Activated CD8-positive, alpha-beta T cell treated with anti-CD3 and anti-CD28 coated beads, Interleukin-2, amount 10 ng/mL, durations not matched to agents 7 days and 5 days (primary cell): ENCODE measurements at regions of chrX and their contacts with region 1.

Region 1: GRCh38 chrX:37745354-37745753 is 34.5 kb upstream of the CYBB start:
- DNase-seq: peak; percentile 85
- ATAC-seq: peak; percentile 92
- H3K4me3 Mint-ChIP-seq: no peak overlapping the region
- H3K27ac Mint-ChIP-seq: peak overlapping the region; percentile 74
- H3K4me1 Mint-ChIP-seq: peaks cover 18% of the 10 kb centered on the region
- H3K27me3 Mint-ChIP-seq: peaks cover 6% of the 10 kb centered on the region

Region 2: DNA sequence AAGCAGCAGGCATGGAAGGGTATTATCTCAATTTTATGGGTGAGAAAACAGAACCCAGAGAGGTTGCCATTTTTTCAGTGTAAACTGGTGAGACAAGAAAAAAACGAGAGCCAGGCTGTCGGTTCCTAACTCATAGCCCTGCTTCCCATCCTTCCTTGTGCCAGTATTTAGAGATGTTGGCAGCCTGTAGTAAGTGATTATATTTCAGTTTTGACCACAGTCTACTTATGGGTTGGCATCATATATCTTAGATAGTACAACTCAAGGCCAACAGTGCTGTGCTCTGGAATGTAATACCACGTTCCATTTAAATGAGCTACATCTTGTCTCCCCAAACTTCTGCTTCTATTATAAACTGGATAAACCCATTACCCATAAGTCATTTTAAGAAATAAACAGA is 19.0 kb before region 1 on chrX:
- CTCF ChIA-PET with region 1: no interaction called
- POLR2A ChIA-PET with region 1: no interaction called
- DNase-seq: no peak
- ATAC-seq: no peak
- H3K4me3 Mint-ChIP-seq: no peak overlapping the region
- H3K27ac Mint-ChIP-seq: no peak overlapping the region
- H3K4me1 Mint-ChIP-seq: no peaks in the 10 kb centered on the region
- H3K27me3 Mint-ChIP-seq: peaks cover 13% of the 10 kb centered on the region

Region 3: GRCh38 chrX:37763400-37763799 is 18.0 kb after region 1 on chrX:
- CTCF ChIA-PET with region 1: interaction called, 11 read pairs
- POLR2A ChIA-PET with region 1: no interaction called
- DNase-seq: no peak
- ATAC-seq: no peak
- H3K4me3 Mint-ChIP-seq: no peak overlapping the region
- H3K27ac Mint-ChIP-seq: no peak overlapping the region
- H3K4me1 Mint-ChIP-seq: peaks cover 31% of the 10 kb centered on the region
- H3K27me3 Mint-ChIP-seq: no peaks in the 10 kb centered on the region

Region 4: DNA sequence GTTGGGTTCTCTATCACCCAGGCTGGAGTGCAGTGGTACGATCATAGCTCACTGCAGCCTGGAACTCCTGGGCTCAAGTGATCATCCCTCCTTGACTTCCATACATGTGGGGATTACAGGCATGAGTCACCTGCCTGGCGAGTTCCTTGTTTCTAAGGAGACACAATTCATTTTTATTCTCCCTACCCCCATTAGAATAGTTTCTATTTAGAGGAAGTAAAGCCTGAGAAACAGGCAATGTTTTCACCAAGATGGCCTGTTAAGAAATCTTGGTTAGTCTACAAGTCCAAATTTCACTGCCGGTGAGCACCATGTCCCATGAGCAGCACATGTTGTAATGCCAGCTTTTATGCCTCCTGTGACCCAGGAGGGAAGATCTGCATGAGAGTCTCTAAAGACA is 40.2 kb after region 1 on chrX:
- CTCF ChIA-PET with region 1: interaction called, 10 read pairs
- POLR2A ChIA-PET with region 1: no interaction called
- DNase-seq: no peak
- ATAC-seq: no peak
- H3K4me3 Mint-ChIP-seq: no peak overlapping the region
- H3K27ac Mint-ChIP-seq: no peak overlapping the region
- H3K4me1 Mint-ChIP-seq: peaks cover 22% of the 10 kb centered on the region
- H3K27me3 Mint-ChIP-seq: no peaks in the 10 kb centered on the region

Region 5: GRCh38 chrX:37825209-37825842 is 80.0 kb after region 1 on chrX:
- CTCF ChIA-PET with region 1: interaction called, 198 read pairs
- POLR2A ChIA-PET with region 1: interaction called, 10 read pairs
- DNase-seq: peak; percentile 71
- ATAC-seq: peak; percentile 70
- H3K4me3 Mint-ChIP-seq: no peak overlapping the region
- H3K27ac Mint-ChIP-seq: peak overlapping the region; percentile 62
- H3K4me1 Mint-ChIP-seq: peaks cover 35% of the 10 kb centered on the region
- H3K27me3 Mint-ChIP-seq: no peaks in the 10 kb centered on the region

Region 6: GRCh38 chrX:37840931-37841330 is 95.6 kb after region 1 on chrX:
- CTCF ChIA-PET with region 1: interaction called, 18 read pairs
- POLR2A ChIA-PET with region 1: no interaction called
- DNase-seq: no peak
- ATAC-seq: no peak
- H3K4me3 Mint-ChIP-seq: no peak overlapping the region
- H3K27ac Mint-ChIP-seq: no peak overlapping the region
- H3K4me1 Mint-ChIP-seq: peaks cover 10% of the 10 kb centered on the region
- H3K27me3 Mint-ChIP-seq: no peaks in the 10 kb centered on the region